Endothelial cell of umbilical vein (primary cell): ENCODE measurements at regions of chr12 and their contacts with region 1.

Region 1: DNA sequence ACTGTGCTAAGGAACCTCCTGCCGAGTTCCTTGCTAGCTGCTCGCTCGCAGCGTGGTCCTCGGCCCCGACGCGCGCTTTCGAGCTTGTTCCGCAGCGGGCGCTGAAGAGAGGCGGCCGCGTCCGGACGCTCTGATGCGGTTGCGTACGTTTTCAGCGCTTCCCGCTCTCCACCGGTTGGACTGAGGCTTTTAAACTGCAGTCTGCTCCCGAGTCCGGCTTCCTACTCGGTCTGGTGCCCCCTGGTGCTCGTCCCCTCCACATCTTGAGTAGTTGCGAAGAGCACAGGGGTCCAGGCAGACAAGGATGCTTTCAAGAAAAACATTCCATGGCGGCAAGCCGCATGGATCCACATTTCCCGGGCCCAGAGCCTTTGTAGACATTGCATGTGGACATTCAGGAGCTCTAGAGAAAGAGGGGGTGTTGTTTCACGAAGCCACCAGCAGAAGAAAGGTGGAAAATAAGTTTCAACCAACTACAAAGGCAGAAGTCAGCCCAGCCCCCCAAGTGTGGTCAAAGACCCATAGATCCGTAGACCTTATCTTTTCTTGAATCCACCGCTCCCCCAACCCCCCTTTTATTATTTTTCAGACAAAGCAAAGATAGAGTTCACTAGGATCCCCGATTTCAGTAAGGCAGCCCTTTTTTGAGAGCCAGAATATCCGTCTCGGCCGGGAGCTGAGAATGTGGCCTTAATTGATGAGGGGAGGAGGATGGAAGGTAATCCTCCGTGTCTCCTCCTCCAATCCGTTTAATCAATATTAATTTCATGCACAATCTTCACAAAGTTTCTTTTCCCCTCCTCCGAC is 984 bp upstream of the WNK1 start:
- DNase-seq: peak; percentile 97
- H3K4me3 ChIP-seq: peak overlapping the region; percentile 35 to 62 (median 48)
- H3K27ac ChIP-seq: peak overlapping the region; percentile 41
- H3K4me1 ChIP-seq: peaks cover 26% of the 10 kb centered on the region
- H3K27me3 ChIP-seq: no peaks in the 10 kb centered on the region
- CTCF ChIP-seq: peak; percentile 79 to 86
- POLR2A ChIP-seq: peak; percentile 62

Region 2: DNA sequence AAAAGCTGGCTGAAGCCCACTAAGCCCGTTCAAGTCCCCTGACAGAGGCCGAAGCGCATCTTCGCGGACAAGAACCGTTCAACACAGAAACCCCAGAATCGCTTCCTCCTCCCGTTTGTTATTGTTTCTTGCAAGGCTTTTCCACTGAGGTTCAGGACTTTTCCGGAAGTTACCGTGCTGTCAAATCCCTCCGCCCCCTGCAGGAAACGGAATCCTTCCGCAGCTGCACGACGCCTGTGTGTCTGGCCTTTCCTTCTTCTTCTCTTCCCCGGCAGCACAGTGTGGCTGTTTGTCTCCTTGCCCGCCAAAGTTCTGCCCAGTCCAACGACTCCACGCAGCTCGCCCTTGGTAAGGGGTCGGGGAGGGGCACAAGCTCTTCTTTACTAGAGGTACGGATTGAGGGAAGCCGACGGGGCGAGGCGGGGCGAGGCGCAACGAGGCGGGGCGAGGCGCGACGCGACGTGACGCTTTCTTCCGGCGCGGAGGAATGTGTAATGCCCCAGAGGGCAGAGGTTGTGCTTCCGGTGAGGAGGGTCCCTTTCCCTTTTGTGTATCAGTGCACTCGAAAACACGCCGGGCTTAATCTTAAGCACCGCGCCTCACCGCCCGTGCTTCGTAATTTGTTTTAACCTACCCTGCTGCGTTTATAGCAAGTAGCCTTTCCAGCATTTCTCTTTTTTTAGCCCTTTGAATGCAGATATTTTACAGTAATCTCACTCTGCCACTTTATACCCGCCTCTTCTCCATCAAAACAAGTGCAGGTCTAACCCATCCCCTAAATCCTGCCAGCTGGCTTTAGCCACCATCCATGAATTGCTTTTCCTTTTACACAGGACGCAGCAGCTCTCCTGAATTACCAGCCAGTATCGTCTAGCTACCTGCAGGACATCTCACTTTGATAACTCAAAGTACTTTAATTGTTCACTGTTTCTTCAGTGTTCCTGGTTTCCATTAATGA is 362.0 kb before region 1 on chr12 and contains the start of gene KDM5A:
- CTCF ChIA-PET with region 1: no interaction called
- POLR2A ChIA-PET with region 1: no interaction called
- dilution Hi-C with region 1: no loop called
- intact Hi-C with region 1: loop called (anchors 1 kb)
- DNase-seq: peak; percentile 94
- H3K4me3 ChIP-seq: peak within 1 kb of the TSS; percentile 67 to 96 (median 72)
- H3K27ac ChIP-seq: peak within 1 kb of the TSS; percentile 58
- H3K4me1 ChIP-seq: peaks cover 27% of the 10 kb centered on the region
- H3K27me3 ChIP-seq: no peaks in the 10 kb centered on the region
- CTCF ChIP-seq: no peak
- POLR2A ChIP-seq: peak; percentile 79
- total RNA-seq, gene KDM5A: 61.0 and 71.5 TPM in 2 replicates

Region 3: DNA sequence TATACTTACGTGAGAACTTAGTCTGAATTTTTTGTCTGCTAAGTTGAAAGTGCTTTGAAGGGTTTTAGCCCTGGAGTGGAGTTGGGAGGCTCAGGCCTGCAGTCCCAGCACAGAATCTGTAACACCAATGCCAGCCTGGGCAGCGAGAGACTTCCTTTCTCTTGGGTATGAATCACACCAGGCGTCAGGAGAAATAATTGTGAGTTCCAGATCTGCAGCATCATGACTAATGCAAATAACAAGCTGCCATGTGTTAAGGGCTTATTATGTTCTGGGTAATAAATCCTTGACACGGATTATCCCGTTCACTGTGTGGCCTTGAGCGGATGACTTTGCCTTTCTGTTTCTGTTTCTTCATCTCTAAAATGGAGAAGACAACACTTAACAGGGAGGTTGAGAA is 221.1 kb before region 1 on chr12:
- CTCF ChIA-PET with region 1: no interaction called
- POLR2A ChIA-PET with region 1: no interaction called
- dilution Hi-C with region 1: no loop called
- intact Hi-C with region 1: no loop called
- DNase-seq: peak; percentile 79
- H3K4me3 ChIP-seq: no peak overlapping the region
- H3K27ac ChIP-seq: no peak overlapping the region
- H3K4me1 ChIP-seq: peaks cover 7% of the 10 kb centered on the region
- H3K27me3 ChIP-seq: peaks cover 2 to 6% of the 10 kb centered on the region in 2 experiments
- CTCF ChIP-seq: no peak
- POLR2A ChIP-seq: no peak

Region 4: DNA sequence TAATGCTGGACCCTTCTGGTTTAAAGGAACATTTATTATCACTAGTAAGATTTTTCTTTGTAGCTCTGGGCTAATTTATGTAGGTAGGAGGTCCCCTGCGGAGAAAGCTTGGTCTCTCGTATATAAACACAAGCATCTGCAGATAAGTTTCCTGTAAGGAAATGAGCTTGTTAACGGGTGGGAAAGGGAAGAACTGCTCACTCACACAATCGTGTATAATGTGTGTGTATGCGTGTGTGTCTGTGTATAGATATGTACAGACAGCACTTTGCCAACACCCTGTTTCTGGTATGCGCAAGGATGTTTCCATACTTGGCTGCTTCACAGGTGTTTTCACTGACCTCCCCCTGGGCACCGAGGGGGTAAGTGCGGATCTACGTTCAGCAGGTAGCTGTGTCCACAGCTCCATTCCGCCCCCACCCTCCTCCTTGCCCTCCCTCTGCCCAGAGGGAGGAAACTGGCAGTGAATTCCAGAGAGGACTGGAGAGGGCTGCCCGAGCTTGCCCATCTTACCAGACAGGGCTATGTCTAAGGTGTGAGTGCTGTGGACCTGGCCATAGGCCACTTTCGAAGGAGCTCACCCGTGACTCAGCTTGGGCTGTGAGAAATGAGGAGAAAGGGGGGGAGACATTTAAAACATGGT is 153.3 kb before region 1 on chr12:
- CTCF ChIA-PET with region 1: interaction called, 29 read pairs
- POLR2A ChIA-PET with region 1: no interaction called
- dilution Hi-C with region 1: no loop called
- intact Hi-C with region 1: no loop called
- DNase-seq: peak; percentile 91
- H3K4me3 ChIP-seq: peak overlapping the region in 1 of 3 experiments; percentile 1
- H3K27ac ChIP-seq: peak overlapping the region; percentile 63
- H3K4me1 ChIP-seq: peaks cover 13% of the 10 kb centered on the region
- H3K27me3 ChIP-seq: peaks cover 3 to 5% of the 10 kb centered on the region in 2 experiments
- CTCF ChIP-seq: no peak
- POLR2A ChIP-seq: no peak

Region 5: GRCh38 chr12:622416-622815 is 129.0 kb before region 1 on chr12:
- CTCF ChIA-PET with region 1: interaction called, 12 read pairs
- POLR2A ChIA-PET with region 1: interaction called, 8 read pairs
- dilution Hi-C with region 1: no loop called
- intact Hi-C with region 1: no loop called
- DNase-seq: peak; percentile 81
- H3K4me3 ChIP-seq: no peak overlapping the region
- H3K27ac ChIP-seq: peak overlapping the region; percentile 77
- H3K4me1 ChIP-seq: peaks cover 8% of the 10 kb centered on the region
- H3K27me3 ChIP-seq: no peaks in the 10 kb centered on the region
- CTCF ChIP-seq: no peak
- POLR2A ChIP-seq: no peak

Region 6: DNA sequence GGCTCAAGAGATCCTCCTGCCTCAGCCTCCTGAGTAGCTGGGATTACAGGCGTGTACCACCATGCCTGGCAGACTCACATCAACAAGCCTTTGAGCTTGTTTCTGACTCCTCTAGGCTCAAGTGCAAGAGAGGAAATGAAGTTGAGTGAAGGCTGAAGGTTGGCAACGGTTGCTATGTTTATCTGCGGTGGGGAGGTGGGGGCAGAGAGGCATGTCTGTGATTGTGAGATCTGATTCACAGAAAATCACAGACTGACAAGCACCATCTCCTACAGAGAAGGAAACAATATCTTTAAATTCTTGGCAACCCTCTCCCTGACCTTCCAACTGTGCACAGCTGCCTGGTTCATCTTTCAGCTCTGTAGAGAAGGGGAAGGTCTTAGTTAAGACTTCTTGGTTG is 66.0 kb before region 1 on chr12:
- CTCF ChIA-PET with region 1: interaction called, 14 read pairs
- POLR2A ChIA-PET with region 1: no interaction called
- dilution Hi-C with region 1: no loop called
- intact Hi-C with region 1: no loop called
- DNase-seq: peak; percentile 77
- H3K4me3 ChIP-seq: no peak overlapping the region
- H3K27ac ChIP-seq: no peak overlapping the region
- H3K4me1 ChIP-seq: no peaks in the 10 kb centered on the region
- H3K27me3 ChIP-seq: no peaks in the 10 kb centered on the region
- CTCF ChIP-seq: no peak
- POLR2A ChIP-seq: no peak

Region 7: DNA sequence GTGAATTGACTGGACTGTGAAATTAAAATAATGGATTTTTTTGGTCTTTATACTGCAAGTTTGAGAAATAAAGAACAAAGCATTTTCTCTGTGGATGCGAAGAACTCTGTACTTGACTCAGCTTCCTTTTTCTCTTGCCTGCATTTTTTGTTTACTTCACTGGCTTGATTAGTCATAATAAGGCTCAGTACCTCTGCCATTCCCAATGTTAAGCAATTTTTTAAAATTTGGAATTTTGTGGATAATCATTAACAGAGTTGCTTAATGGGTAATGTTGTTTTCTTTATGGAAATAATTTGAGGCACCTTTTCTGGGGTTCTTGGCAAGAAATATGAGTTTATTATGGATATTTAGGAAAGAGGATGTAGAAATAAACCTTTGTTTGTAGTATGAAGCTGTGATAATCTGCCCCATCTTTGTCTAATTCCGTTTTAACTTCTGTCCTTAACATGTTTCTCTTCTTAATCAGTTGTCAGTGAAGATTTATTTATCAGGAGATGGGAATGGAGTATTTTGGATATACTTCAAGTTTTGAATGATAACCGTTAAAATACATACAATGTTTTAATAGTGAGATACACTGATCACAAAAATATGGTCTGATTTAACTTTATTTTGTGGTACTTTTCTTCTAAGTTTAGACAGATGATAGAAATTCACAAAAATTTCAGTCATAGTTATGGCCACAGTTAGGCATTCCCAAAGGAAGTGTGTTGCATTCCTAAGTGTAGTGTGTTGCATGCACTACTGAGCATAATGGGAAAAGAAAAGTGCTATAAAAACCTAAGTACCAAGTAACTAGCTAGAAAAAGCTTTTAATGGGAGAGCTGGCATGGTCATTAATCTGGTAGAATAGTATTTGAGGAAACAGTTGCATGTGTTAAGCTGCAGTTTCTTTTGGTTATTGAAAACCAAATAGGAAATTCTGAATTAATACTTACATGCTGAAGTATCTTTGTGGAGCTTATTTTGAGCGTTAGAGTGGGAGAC is 28.6 kb after region 1 on chr12:
- CTCF ChIA-PET with region 1: interaction called, 28 read pairs
- POLR2A ChIA-PET with region 1: no interaction called
- dilution Hi-C with region 1: no loop called
- intact Hi-C with region 1: loop called (anchors 2 kb)
- DNase-seq: peak; percentile 79
- H3K4me3 ChIP-seq: peak overlapping the region in 2 of 3 experiments; percentile 17 to 62
- H3K27ac ChIP-seq: peak overlapping the region; percentile 72
- H3K4me1 ChIP-seq: peaks cover 23% of the 10 kb centered on the region
- H3K27me3 ChIP-seq: no peaks in the 10 kb centered on the region
- CTCF ChIP-seq: no peak
- POLR2A ChIP-seq: no peak

Region 8: DNA sequence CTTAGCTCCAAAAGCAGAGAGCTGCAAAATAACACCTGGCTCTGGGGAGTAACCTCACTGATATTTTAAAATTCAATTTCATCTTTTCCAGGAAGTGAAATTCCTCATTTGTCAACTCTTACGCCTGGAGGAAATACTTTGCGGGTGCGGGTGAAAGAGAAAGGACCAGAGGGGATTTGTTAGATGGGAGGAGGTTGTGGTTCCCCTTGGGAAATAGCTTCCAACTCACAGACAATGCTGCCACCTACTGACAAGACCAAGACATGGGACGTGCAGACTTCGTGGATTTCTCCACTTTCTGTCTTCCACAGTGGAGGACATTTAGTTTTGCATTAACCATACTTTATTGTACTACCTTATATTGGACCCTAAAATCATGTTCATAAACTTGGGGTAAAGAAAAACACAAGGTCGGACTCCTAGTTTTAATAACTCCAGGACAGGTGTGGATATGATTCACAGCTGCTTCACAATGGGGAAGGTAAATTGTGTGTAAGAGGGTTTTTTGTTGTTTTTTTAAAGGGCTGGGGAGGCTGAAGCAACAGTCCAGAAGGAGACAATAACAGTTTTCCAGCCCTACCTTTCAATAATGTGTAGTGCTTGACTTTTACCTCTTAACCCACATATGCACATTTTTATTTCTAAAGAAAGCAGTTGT is 832.2 kb after region 1 on chr12:
- CTCF ChIA-PET with region 1: interaction called, 8 read pairs
- POLR2A ChIA-PET with region 1: no interaction called
- dilution Hi-C with region 1: no loop called
- intact Hi-C with region 1: loop called (anchors 10 kb)
- DNase-seq: peak; percentile 80
- H3K4me3 ChIP-seq: no peak overlapping the region
- H3K27ac ChIP-seq: no peak overlapping the region
- H3K4me1 ChIP-seq: peaks cover 6% of the 10 kb centered on the region
- H3K27me3 ChIP-seq: no peaks in the 10 kb centered on the region
- CTCF ChIP-seq: peak; percentile 74 to 79
- POLR2A ChIP-seq: no peak